Dendritic cell treated with granulocyte-macrophage colony-stimulating factor and Interleukin-4, amounts not matched to agents 40 ng/mL and 50 ng/mL, for 4 days (primary cell): ENCODE measurements at regions of chr4 and their contacts with region 1.

Region 1: DNA sequence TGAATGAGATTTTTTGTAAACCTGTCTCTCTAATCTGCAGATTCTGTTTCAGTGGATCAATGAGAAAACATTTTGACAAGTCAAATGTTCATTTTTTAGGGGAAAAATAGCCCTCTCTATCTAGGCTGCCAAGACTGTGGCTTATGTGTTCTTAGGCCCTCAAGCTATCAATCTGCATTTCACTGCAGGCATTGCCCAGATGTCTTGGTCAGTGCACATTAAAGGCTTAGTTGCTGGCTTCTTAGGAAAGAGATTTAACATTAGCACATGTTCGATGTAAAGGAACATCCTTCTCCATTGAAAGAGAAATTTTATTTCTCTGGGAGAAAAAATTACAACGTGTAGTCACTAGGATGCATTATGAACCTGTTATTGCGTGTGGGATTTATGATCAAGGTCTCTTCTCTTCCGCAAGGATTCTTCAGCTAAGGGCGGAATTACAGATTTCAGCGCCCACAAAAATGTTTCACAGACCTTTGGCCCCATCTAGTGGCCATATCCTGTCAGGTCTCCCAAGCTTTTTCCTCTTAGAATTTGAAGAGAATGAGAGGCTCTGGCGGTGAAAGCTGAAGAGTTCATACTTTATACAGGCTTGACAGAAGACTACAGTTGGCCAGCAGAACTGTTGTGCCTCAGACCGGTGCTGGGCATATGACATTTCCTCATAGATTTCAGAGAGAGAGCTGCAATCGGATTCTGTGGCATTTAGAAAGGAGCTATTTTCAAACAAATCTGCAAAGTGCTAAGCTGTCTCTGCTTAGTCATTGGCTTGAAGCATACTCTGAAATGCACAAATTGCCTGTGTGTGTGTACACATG is 144.6 kb upstream of the NOCT start:
- H3K4me3 Mint-ChIP-seq: no peak overlapping the region
- H3K27ac Mint-ChIP-seq: no peak overlapping the region
- H3K4me1 Mint-ChIP-seq: no peaks in the 10 kb centered on the region
- H3K27me3 Mint-ChIP-seq: peaks cover 16% of the 10 kb centered on the region

Region 2: GRCh38 chr4:138919094-138919936 is 48.4 kb after region 1 on chr4:
- intact Hi-C with region 1: loop called (anchors 5 kb)
- H3K4me3 Mint-ChIP-seq: no peak overlapping the region
- H3K27ac Mint-ChIP-seq: no peak overlapping the region
- H3K4me1 Mint-ChIP-seq: peaks cover 21% of the 10 kb centered on the region
- H3K27me3 Mint-ChIP-seq: peaks cover 5% of the 10 kb centered on the region